CD4-positive, alpha-beta T cell (primary cell): ENCODE measurements at regions of chr11 and their contacts with region 1.

Region 1: GRCh38 chr11:47642099-47642855 is at the start of gene MTCH2:
- DNase-seq: peak; percentile 91 to 99 (median 95)
- ATAC-seq: peak; percentile 92
- H3K4me3 ChIP-seq: peak within 1 kb of the TSS; percentile 96
- H3K4me3 Mint-ChIP-seq: peak within 1 kb of the TSS; percentile 90
- H3K27ac ChIP-seq: peak within 1 kb of the TSS; percentile 88 to 91
- H3K27ac Mint-ChIP-seq: peak within 1 kb of the TSS; percentile 89
- H3K4me1 ChIP-seq: peaks cover 28% of the 10 kb centered on the region
- H3K4me1 Mint-ChIP-seq: peaks cover 26% of the 10 kb centered on the region
- H3K27me3 ChIP-seq: no peaks in the 10 kb centered on the region
- H3K27me3 Mint-ChIP-seq: no peaks in the 10 kb centered on the region
- CTCF ChIP-seq: peak; percentile 6
- total RNA-seq, gene MTCH2: 11.8 to 12.7 TPM

Region 2: GRCh38 chr11:47572715-47573255 is 69.5 kb before region 1 on chr11:
- CTCF ChIA-PET with region 1: no interaction called
- POLR2A ChIA-PET with region 1: no interaction called
- intact Hi-C with region 1: no loop called
- DNase-seq: no peak
- ATAC-seq: no peak
- H3K4me3 ChIP-seq: no peak overlapping the region
- H3K4me3 Mint-ChIP-seq: peak overlapping the region; percentile 20
- H3K27ac ChIP-seq: no peak overlapping the region
- H3K27ac Mint-ChIP-seq: no peak overlapping the region
- H3K4me1 ChIP-seq: peaks cover 17% of the 10 kb centered on the region
- H3K4me1 Mint-ChIP-seq: peaks cover 18% of the 10 kb centered on the region
- H3K27me3 ChIP-seq: no peaks in the 10 kb centered on the region
- H3K27me3 Mint-ChIP-seq: no peaks in the 10 kb centered on the region
- CTCF ChIP-seq: no peak

Region 3: GRCh38 chr11:47715082-47715669 is 72.9 kb after region 1 on chr11 and contains the start of gene AGBL2:
- CTCF ChIA-PET with region 1: no interaction called
- POLR2A ChIA-PET with region 1: interaction called, 4 read pairs
- intact Hi-C with region 1: loop called (anchors 1 to 2 kb)
- DNase-seq: peak; percentile 67 to 90 (median 80)
- ATAC-seq: peak; percentile 97
- H3K4me3 ChIP-seq: peak within 1 kb of the TSS; percentile 96
- H3K4me3 Mint-ChIP-seq: peak within 1 kb of the TSS; percentile 97
- H3K27ac ChIP-seq: peak within 1 kb of the TSS; percentile 91 to 94
- H3K27ac Mint-ChIP-seq: peak within 1 kb of the TSS; percentile 93
- H3K4me1 ChIP-seq: peaks cover 13% of the 10 kb centered on the region
- H3K4me1 Mint-ChIP-seq: peaks cover 19% of the 10 kb centered on the region
- H3K27me3 ChIP-seq: no peaks in the 10 kb centered on the region
- H3K27me3 Mint-ChIP-seq: no peaks in the 10 kb centered on the region
- CTCF ChIP-seq: no peak
- total RNA-seq, gene AGBL2: 3.6 to 4.4 TPM